Activated naive CD4-positive, alpha-beta T cell treated with anti-CD3 and anti-CD28 coated beads for 36 hours (primary cell): ENCODE measurements at regions of chr4 and their contacts with region 1.

Region 1: GRCh38 chr4:148056869-148057268 is 325.0 kb downstream of the ARHGAP10 start:
- DNase-seq: peak; percentile 81
- H3K4me3 Mint-ChIP-seq: no peak overlapping the region
- H3K27ac Mint-ChIP-seq: no peak overlapping the region
- H3K4me1 Mint-ChIP-seq: peaks cover 76% of the 10 kb centered on the region
- H3K27me3 Mint-ChIP-seq: no peaks in the 10 kb centered on the region

Region 2: GRCh38 chr4:147731580-147732517 is 325.0 kb before region 1 on chr4 and contains the start of gene ARHGAP10:
- CTCF ChIA-PET with region 1: no interaction called
- intact Hi-C with region 1: loop called (anchors 5 kb)
- DNase-seq: peak; percentile 72
- H3K4me3 Mint-ChIP-seq: peak within 1 kb of the TSS; percentile 85
- H3K27ac Mint-ChIP-seq: peak within 1 kb of the TSS; percentile 59
- H3K4me1 Mint-ChIP-seq: peaks cover 34% of the 10 kb centered on the region
- H3K27me3 Mint-ChIP-seq: peaks cover 8% of the 10 kb centered on the region
- total RNA-seq, gene ARHGAP10: 3.6 to 3.8 TPM

Region 3: DNA sequence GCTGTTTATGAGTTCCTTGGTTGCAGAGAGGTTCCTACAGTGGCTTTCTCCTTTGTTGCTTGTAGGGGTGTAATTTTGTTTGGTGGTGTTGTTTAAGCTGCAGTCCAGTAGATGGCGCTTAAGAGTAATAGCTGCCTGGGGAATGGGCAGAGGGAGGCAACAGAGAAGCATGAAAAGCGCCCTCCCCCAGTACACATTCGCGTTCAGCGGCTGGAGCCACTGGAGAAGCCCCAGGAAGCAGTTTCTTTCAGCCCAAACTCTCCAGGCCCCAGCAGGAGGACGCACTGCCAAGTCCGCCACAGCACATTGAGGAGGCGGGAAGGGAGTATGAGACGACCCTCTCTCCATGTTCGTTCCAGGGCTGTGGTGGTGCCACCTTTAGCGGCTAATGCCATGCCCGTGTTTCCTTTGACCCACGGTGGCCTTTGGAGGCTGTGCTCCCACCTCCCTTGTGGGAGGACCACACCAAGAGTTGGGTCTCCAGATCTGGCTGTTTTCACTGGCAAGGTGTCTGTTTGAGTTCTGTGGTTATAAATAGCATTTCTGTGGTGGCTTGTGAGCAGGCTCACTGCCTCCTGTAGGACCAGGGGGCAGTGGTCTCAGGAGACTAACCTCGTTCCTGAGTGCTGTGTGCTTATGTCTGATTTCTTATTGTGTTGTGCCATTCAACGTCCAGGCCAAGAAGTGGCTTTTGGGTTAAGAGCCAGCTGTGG is 72.6 kb before region 1 on chr4:
- CTCF ChIA-PET with region 1: no interaction called
- intact Hi-C with region 1: loop called (anchors 5 kb)
- DNase-seq: peak; percentile 19
- H3K4me3 Mint-ChIP-seq: no peak overlapping the region
- H3K27ac Mint-ChIP-seq: no peak overlapping the region
- H3K4me1 Mint-ChIP-seq: peaks cover 9% of the 10 kb centered on the region
- H3K27me3 Mint-ChIP-seq: no peaks in the 10 kb centered on the region

Region 4: GRCh38 chr4:148094149-148094548 is 37.3 kb after region 1 on chr4:
- CTCF ChIA-PET with region 1: no interaction called
- intact Hi-C with region 1: no loop called
- DNase-seq: no peak
- H3K4me3 Mint-ChIP-seq: no peak overlapping the region
- H3K27ac Mint-ChIP-seq: no peak overlapping the region
- H3K4me1 Mint-ChIP-seq: peaks cover 5% of the 10 kb centered on the region
- H3K27me3 Mint-ChIP-seq: no peaks in the 10 kb centered on the region

Region 5: DNA sequence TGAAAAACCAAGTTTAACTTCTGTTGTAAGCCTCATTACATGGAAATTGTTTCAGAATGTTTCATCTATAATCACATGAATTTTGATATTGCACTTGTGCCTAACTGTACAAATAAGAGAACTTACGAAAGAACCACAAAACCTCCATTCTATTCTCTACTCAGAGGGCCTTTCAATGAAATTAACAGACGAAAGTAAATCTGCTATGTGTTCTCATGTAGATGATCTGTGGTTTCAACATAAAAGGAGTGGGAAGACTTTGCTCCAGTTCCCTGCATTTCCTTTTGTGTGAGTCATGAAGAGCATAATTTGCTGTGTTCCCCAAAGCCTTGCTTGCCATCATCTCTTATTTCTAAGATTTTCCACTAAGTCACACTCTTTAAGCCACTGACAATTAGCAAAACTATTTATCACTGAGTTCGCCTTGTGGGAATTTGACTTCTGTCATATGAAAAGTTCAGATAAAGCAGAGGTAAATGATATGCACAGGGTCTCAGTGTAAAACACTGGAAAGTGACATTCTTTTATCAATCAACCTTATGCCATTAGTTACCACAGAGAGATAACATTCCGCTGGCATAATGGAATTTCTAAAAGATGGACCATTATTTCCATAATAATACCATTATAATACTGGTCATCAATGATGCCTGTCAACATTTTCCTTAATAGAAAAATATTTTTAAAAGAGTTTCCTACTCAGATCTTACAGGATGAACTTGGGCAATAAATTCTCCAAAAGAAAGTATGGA is 55.5 kb after region 1 on chr4:
- CTCF ChIA-PET with region 1: no interaction called
- intact Hi-C with region 1: loop called (anchors 1 kb)
- DNase-seq: no peak
- H3K4me3 Mint-ChIP-seq: no peak overlapping the region
- H3K27ac Mint-ChIP-seq: no peak overlapping the region
- H3K4me1 Mint-ChIP-seq: peaks cover 38% of the 10 kb centered on the region
- H3K27me3 Mint-ChIP-seq: no peaks in the 10 kb centered on the region

Region 6: DNA sequence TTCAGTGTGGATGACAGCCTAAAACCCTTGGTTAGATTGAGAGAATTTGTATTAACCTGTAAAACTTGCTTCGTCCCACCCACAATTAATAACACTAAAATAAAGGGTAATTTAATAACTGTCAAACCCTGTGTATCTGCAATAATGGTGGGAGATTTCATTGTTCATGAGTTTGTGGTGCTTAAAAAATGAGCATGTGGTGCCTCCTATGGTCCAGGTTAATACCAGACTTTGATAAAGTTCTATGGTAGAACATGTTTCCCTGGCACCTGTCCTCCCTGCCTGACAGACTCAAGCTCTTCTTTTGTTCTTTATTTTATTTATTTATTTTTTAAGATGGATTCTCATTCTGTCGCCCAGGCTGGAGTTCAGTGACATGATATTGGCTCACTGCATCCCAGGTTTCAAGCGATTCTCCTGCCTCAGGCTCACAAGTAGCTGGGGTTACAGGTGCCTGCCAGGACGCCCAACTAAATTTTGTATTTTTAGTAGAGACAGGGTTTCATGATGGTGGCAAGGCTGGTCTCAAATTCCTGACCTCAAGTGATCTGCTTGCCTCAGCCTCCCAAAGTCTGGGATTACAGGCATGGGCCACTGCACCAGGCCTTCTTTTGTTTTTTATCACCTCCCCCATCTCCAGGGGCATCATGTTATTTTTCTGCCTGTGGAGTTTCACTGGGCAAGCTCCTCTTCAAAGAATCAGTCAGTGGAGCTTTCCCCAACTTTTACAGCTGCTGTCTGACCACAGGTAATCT is 96.2 kb after region 1 on chr4:
- CTCF ChIA-PET with region 1: no interaction called
- intact Hi-C with region 1: loop called (anchors 5 kb)
- DNase-seq: no peak
- H3K4me3 Mint-ChIP-seq: no peak overlapping the region
- H3K27ac Mint-ChIP-seq: no peak overlapping the region
- H3K4me1 Mint-ChIP-seq: no peaks in the 10 kb centered on the region
- H3K27me3 Mint-ChIP-seq: no peaks in the 10 kb centered on the region

Region 7: DNA sequence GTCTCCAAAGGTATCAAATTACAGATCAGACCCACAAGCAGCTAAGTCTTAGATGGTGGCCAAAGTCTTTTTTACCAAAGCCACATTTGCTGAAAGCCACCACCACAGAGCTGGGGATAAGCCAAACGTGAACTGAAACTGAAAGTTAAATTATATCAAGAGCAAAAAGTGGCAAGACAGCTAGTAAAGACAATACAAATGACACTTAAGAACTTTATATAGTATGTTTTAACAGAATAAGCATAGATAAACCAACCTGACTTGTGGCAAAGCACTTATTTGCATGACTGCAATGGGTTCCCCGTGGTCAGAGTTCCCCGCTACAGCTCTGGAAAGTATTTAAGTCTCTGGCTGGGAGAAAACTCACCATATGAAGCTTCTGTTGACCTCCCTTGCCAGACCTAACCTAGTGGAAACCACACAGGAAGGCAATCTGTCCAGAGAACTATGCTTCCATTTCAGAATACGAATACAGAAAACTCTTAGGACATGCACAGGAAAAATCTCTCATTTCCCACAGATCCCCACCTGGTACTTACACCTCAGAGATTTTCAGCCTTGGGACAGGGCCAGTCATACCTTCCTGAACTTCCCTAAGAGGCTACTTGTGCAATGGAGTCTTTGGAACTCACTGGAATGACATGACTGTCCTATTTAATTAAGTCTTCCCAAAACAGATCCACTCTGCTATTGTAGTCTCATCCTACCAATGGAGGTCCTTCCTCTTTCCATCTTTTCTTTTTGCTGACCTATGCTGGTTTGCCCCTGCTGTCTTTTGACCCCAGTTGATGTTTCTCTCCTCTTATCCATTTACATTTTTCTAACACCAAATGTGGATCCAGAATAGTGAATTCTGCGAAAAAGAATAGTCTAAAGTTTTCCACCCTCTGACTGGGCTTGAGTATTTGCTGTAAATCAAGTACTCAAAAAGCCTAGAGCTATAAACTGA is 160.3 kb after region 1 on chr4:
- CTCF ChIA-PET with region 1: no interaction called
- intact Hi-C with region 1: loop called (anchors 2 kb)
- DNase-seq: peak; percentile 25
- H3K4me3 Mint-ChIP-seq: peak overlapping the region; percentile 63
- H3K27ac Mint-ChIP-seq: peak overlapping the region; percentile 15
- H3K4me1 Mint-ChIP-seq: peaks cover 25% of the 10 kb centered on the region
- H3K27me3 Mint-ChIP-seq: no peaks in the 10 kb centered on the region